ENCODE measurements at regions of chr21 and their contacts with region 1.

Region 1: DNA sequence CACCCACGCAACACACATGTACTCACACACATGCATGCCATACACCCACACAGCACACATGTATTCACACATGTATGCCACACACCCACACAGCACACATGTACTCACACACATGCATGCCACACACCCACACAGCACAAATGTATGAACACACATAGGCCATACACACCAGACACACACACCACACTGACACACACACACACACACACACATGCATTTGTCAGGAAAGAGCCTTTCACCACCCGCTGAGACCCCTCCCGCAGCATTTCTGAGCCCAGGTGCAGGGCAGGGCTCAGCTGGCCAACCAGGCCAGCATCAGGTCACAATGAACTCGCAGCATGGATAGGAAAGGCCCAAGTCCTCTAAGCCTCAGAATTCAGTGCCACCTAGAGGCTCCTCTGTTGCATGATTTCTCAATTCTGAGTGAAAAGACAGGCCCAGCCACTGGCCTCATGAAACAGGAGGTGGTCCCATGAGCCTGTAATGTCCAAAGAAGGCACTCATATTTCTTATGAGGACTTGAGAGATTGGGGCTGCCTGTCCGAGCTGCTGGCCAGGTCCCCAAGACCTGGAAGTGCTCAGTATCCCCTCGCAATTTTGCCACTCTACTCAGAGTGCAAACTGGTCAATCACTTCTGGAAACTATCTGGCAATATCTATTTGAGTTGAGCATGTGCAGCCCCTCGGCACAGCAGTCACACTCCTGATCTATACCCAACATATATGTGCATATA is 57.3 kb downstream of the PSMG1 start:
- DNase-seq: peak; percentile 78
- H3K4me3 Mint-ChIP-seq: no peak overlapping the region
- H3K27ac Mint-ChIP-seq: peak overlapping the region; percentile 59
- H3K4me1 Mint-ChIP-seq: peaks cover 6% of the 10 kb centered on the region
- H3K27me3 Mint-ChIP-seq: no peaks in the 10 kb centered on the region
- CTCF ChIP-seq: peak; percentile 72

Region 2: DNA sequence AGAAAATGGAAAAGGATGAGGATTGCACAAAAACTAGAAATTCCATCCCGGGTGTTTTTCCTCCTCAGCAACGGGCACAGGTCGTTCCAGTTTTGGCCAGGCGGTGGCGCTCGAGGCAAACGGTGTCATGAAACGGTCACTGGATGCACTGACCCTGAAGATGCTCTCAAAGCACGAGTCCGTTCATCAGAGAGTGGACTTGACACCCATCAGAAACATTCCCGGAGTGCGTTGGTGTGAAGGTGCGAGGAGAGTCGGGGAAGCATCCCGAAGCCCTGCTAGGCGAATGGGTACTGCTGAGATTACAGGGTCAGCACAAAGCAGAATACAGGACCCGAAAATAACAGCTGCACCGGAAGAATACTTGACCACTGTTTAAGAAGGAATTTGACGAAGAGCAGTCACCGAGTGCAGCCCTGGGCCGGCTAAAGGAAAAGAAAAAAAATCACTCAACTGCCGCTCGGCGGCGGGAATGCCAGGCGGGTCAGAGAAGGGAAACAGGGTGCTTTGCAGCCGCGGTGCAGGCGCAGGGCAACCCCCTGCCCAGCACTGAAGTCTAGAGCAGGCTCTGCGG is 391.9 kb before region 1 on chr21:
- CTCF ChIA-PET with region 1: interaction called, 4 read pairs
- POLR2A ChIA-PET with region 1: interaction called, 3 read pairs
- intact Hi-C with region 1: loop called (anchors 1 kb)
- DNase-seq: peak; percentile 75
- H3K4me3 Mint-ChIP-seq: no peak overlapping the region
- H3K27ac Mint-ChIP-seq: no peak overlapping the region
- H3K4me1 Mint-ChIP-seq: peaks cover 4% of the 10 kb centered on the region
- H3K27me3 Mint-ChIP-seq: no peaks in the 10 kb centered on the region
- CTCF ChIP-seq: peak; percentile 91

Region 3: GRCh38 chr21:39016740-39017315 is 109.1 kb before region 1 on chr21:
- CTCF ChIA-PET with region 1: no interaction called
- POLR2A ChIA-PET with region 1: interaction called, 4 read pairs
- intact Hi-C with region 1: loop called (anchors 10 kb)
- DNase-seq: no peak
- H3K4me3 Mint-ChIP-seq: no peak overlapping the region
- H3K27ac Mint-ChIP-seq: no peak overlapping the region
- H3K4me1 Mint-ChIP-seq: peaks cover 27% of the 10 kb centered on the region
- H3K27me3 Mint-ChIP-seq: no peaks in the 10 kb centered on the region
- CTCF ChIP-seq: no peak

Measured in MCF 10A (cell line).